Calu3 (cell line): ENCODE measurements at regions of chr2 and their contacts with region 1.

Region 1: GRCh38 chr2:50143822-50144575 is 887.9 kb downstream of the NRXN1 start:
- DNase-seq: peak; percentile 8
- H3K4me3 Mint-ChIP-seq: peak overlapping the region; percentile 64
- H3K27ac Mint-ChIP-seq: peak overlapping the region; percentile 19
- H3K4me1 Mint-ChIP-seq: no peaks in the 10 kb centered on the region
- H3K27me3 Mint-ChIP-seq: no peaks in the 10 kb centered on the region
- CTCF ChIP-seq: peak; percentile 29

Region 2: DNA sequence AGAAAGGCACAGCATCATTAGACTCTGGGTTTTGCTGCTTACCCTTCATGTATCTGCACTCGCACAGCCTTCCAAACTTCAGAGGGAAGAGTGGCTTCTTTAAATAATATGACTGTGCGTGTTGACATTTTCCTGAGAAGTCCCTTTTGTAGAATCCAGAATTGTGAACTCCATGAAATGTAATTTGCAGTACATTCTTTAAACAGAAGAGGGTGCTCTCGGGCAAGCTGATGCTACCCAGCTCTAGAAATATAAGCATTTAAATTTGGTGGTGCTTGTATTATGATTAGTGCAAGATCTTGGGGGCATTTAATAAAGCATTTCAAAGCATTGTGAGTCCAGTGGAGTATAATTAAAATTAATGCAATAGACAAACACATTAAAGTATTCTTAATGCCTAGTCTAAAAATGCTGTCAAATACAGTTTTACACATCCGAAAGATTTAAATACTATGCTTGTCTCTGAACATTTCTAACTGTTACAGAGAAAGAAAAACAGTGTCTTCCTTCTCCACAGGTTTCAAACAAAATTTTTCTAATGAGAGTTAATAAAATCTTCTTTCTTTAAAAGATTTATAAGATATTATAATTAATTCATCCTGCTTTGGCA is 1543.7 kb before region 1 on chr2:
- CTCF ChIA-PET with region 1: no interaction called
- intact Hi-C with region 1: loop called (anchors 10 kb)
- DNase-seq: peak; percentile 41
- H3K4me3 Mint-ChIP-seq: no peak overlapping the region
- H3K27ac Mint-ChIP-seq: no peak overlapping the region
- H3K4me1 Mint-ChIP-seq: no peaks in the 10 kb centered on the region
- H3K27me3 Mint-ChIP-seq: no peaks in the 10 kb centered on the region
- CTCF ChIP-seq: peak; percentile 44

Region 3: GRCh38 chr2:48946449-48947048 is 1197.5 kb before region 1 on chr2:
- CTCF ChIA-PET with region 1: no interaction called
- intact Hi-C with region 1: loop called (anchors 1 kb)
- DNase-seq: peak; percentile 47
- H3K4me3 Mint-ChIP-seq: no peak overlapping the region
- H3K27ac Mint-ChIP-seq: no peak overlapping the region
- H3K4me1 Mint-ChIP-seq: no peaks in the 10 kb centered on the region
- H3K27me3 Mint-ChIP-seq: peaks cover 15% of the 10 kb centered on the region
- CTCF ChIP-seq: peak; percentile 80

Region 4: DNA sequence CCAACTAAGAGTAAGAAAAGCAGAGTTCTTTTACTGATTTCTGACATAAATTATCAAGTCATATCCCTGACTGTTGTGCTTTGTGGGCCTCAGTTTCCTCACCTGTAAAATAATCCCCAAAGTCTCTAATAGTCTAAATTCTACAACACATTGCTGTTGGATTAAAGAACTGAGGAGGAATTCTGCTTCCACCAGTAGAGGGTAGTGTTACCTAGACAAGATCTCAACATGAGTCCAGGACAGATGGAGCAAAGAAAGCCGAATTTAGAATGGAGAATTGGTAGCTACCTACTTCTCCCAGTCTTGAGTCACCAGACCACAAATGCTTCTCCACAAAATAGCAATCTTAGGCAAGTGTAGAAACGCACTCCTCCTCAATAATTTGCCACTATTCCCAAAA is 527.2 kb before region 1 on chr2:
- CTCF ChIA-PET with region 1: interaction called, 4 read pairs
- intact Hi-C with region 1: loop called (anchors 1 kb)
- DNase-seq: peak; percentile 4
- H3K4me3 Mint-ChIP-seq: no peak overlapping the region
- H3K27ac Mint-ChIP-seq: no peak overlapping the region
- H3K4me1 Mint-ChIP-seq: no peaks in the 10 kb centered on the region
- H3K27me3 Mint-ChIP-seq: peaks cover 7% of the 10 kb centered on the region
- CTCF ChIP-seq: no peak

Region 5: GRCh38 chr2:49687918-49688317 is 456.1 kb before region 1 on chr2:
- CTCF ChIA-PET with region 1: interaction called, 20 read pairs
- intact Hi-C with region 1: loop called (anchors 1 kb)
- DNase-seq: no peak
- H3K4me3 Mint-ChIP-seq: no peak overlapping the region
- H3K27ac Mint-ChIP-seq: no peak overlapping the region
- H3K4me1 Mint-ChIP-seq: no peaks in the 10 kb centered on the region
- H3K27me3 Mint-ChIP-seq: no peaks in the 10 kb centered on the region
- CTCF ChIP-seq: no peak

Region 6: DNA sequence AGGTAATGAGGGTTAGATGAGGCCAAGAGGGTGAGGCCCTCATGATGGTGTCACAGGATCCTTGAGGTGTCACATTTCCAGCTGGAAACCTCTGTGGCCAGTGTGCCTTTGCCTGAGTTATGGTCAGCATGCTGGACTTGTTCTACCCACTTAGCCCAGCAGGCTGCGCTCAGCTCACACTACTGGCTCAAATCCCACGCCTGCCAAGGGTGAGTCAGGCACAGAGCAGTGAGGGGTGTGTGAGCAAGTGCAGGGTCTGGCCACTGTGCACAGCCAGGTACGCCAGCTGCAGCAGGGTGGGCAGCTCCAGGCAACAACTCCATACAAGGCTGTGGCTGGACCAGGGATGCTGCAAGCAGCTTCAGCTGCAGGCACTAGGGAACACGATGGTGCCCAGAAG is 373.1 kb before region 1 on chr2:
- CTCF ChIA-PET with region 1: interaction called, 6 read pairs
- intact Hi-C with region 1: loop called (anchors 1 kb)
- DNase-seq: peak; percentile 27
- H3K4me3 Mint-ChIP-seq: no peak overlapping the region
- H3K27ac Mint-ChIP-seq: no peak overlapping the region
- H3K4me1 Mint-ChIP-seq: no peaks in the 10 kb centered on the region
- H3K27me3 Mint-ChIP-seq: no peaks in the 10 kb centered on the region
- CTCF ChIP-seq: no peak

Region 7: DNA sequence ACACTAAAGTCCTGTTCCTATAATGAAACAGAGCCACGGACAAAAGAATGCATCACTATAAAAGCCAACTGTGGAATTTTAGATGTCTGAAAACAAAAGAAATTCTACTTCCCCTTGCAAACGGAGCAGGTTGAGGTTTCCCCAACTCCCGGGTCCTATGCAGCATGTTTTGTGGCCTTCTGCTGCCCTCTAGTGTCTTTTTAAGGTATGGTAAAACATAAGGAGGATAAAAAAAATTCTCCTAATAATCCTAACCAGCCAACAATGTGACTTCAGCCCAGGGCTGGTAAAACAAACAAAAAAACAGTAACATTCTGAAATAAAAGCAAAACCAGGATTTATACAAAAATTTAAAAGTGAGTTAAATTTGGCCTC is 348.5 kb after region 1 on chr2:
- CTCF ChIA-PET with region 1: no interaction called
- intact Hi-C with region 1: loop called (anchors 1 kb)
- DNase-seq: peak; percentile 35
- H3K4me3 Mint-ChIP-seq: no peak overlapping the region
- H3K27ac Mint-ChIP-seq: no peak overlapping the region
- H3K4me1 Mint-ChIP-seq: no peaks in the 10 kb centered on the region
- H3K27me3 Mint-ChIP-seq: peaks cover 50% of the 10 kb centered on the region
- CTCF ChIP-seq: peak; percentile 31